ENCODE measurements at regions of chr13 and their contacts with region 1.

Region 1: DNA sequence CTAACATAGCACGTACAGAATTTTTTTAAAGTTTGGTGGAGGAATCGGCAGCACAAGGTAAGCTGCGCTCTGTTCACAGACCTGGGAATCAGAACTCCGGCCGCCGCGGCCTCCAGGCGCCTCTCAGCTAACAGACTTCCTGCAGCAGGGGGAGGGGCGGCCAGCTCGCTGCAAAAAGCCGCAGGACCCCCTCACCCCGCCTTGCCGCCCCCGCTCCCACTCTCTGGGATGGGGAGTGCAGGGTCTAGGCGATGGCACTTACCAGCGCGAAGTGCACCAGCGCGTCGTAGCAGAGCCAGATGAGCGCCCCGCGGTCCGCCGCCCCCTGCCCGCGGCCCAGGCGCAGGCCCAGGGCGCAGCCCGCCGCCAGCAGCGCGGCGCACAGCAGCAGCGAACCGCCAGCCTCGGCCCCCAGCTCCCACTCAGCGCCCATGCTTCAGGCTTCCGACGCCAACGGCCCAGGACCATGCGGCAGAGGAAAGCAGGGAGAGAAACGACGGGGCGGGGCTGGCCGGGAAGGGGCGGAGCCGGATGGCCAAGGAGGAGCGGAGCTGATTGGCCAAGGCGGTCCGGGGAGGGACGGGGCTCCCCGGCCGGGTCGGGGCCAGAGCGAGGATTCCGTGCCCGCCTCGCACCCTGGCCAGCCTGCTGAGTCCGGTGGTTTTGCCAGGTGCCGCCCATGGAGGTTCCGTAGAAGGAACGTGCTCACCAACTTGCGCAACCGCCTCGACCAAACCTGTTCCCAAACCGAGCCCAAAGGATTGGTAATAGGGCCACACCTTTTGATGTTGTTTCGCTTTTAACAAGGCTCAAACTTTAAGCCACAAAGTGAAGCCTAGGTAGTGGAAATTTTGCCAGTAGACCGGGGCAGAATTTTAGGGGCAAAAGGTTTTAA is at the start of gene EBPL:
- DNase-seq: peak; percentile 86
- ATAC-seq: peak; percentile 95
- H3K4me3 ChIP-seq: peak within 1 kb of the TSS; percentile 64 to 79 (median 79)
- H3K27ac ChIP-seq: peak within 1 kb of the TSS; percentile 86
- H3K4me1 ChIP-seq: peaks cover 39% of the 10 kb centered on the region
- H3K27me3 ChIP-seq: no peaks in the 10 kb centered on the region; a peak in 1 of 5 replicates
- CTCF ChIP-seq: no peak; the same call in 1 of the 2 replicates
- EP300 ChIP-seq: 0 out of 4 replicates have a peak, but pooled peaks of 1 of the 2 experiments have one; percentile 8
- POLR2A ChIP-seq: peak; percentile 80 to 88
- RAD21 ChIP-seq: peak; percentile 12; the same call in 1 of the 2 replicates
- total RNA-seq, gene EBPL: 51.8 and 96.5 TPM in 2 replicates

Region 2: GRCh38 chr13:49569956-49570689 is 121.1 kb before region 1 on chr13:
- CTCF ChIA-PET with region 1: no interaction called
- POLR2A ChIA-PET with region 1: no interaction called
- in situ Hi-C with region 1: no loop called
- intact Hi-C with region 1: no loop called
- DNase-seq: no peak
- ATAC-seq: no peak
- H3K4me3 ChIP-seq: no peak overlapping the region
- H3K27ac ChIP-seq: no peak overlapping the region
- H3K4me1 ChIP-seq: no peaks in the 10 kb centered on the region; the same call in 1 of the 2 replicates
- H3K27me3 ChIP-seq: no peaks in the 10 kb centered on the region
- CTCF ChIP-seq: no peak
- EP300 ChIP-seq: no peak
- POLR2A ChIP-seq: no peak
- RAD21 ChIP-seq: no peak

Region 3: GRCh38 chr13:49711218-49711863 is 20.1 kb after region 1 on chr13:
- CTCF ChIA-PET with region 1: no interaction called
- POLR2A ChIA-PET with region 1: interaction called, 13 read pairs
- in situ Hi-C with region 1: no loop called
- intact Hi-C with region 1: no loop called
- DNase-seq: peak; percentile 60
- ATAC-seq: peak; percentile 78
- H3K4me3 ChIP-seq: no peak overlapping the region
- H3K27ac ChIP-seq: peak overlapping the region; percentile 23
- H3K4me1 ChIP-seq: peaks cover 19% of the 10 kb centered on the region
- H3K27me3 ChIP-seq: no peaks in the 10 kb centered on the region; a peak in 1 of 5 replicates
- CTCF ChIP-seq: no peak
- EP300 ChIP-seq: no peak
- POLR2A ChIP-seq: no peak
- RAD21 ChIP-seq: no peak

Region 4: GRCh38 chr13:49740870-49741269 is 49.6 kb after region 1 on chr13:
- CTCF ChIA-PET with region 1: no interaction called
- POLR2A ChIA-PET with region 1: interaction called, 11 read pairs
- in situ Hi-C with region 1: no loop called
- intact Hi-C with region 1: no loop called
- DNase-seq: peak; percentile 74
- ATAC-seq: peak; percentile 76
- H3K4me3 ChIP-seq: no peak overlapping the region
- H3K27ac ChIP-seq: no peak overlapping the region
- H3K4me1 ChIP-seq: peaks cover 36% of the 10 kb centered on the region
- H3K27me3 ChIP-seq: no peaks in the 10 kb centered on the region
- CTCF ChIP-seq: no peak
- EP300 ChIP-seq: peak in 1 of 2 experiments; percentile 64; a peak in 1 of 4 replicates
- POLR2A ChIP-seq: no peak
- RAD21 ChIP-seq: no peak

Region 5: GRCh38 chr13:49746111-49746510 is 54.9 kb after region 1 on chr13:
- CTCF ChIA-PET with region 1: no interaction called
- POLR2A ChIA-PET with region 1: interaction called, 11 read pairs
- in situ Hi-C with region 1: no loop called
- intact Hi-C with region 1: no loop called
- DNase-seq: peak; percentile 85
- ATAC-seq: peak; percentile 99
- H3K4me3 ChIP-seq: no peak overlapping the region; a peak in 1 of 6 replicates
- H3K27ac ChIP-seq: peak overlapping the region; percentile 62
- H3K4me1 ChIP-seq: peaks cover 27% of the 10 kb centered on the region
- H3K27me3 ChIP-seq: no peaks in the 10 kb centered on the region
- CTCF ChIP-seq: no peak
- EP300 ChIP-seq: peak in 1 of 2 experiments; percentile 63; a peak in 2 of 4 replicates
- POLR2A ChIP-seq: no peak
- RAD21 ChIP-seq: no peak

Region 6: GRCh38 chr13:49781806-49782205 is 90.6 kb after region 1 on chr13:
- CTCF ChIA-PET with region 1: no interaction called
- POLR2A ChIA-PET with region 1: no interaction called
- in situ Hi-C with region 1: no loop called
- intact Hi-C with region 1: no loop called
- DNase-seq: no peak
- ATAC-seq: no peak
- H3K4me3 ChIP-seq: no peak overlapping the region
- H3K27ac ChIP-seq: no peak overlapping the region
- H3K4me1 ChIP-seq: peaks cover 81% of the 10 kb centered on the region
- H3K27me3 ChIP-seq: no peaks in the 10 kb centered on the region
- CTCF ChIP-seq: no peak
- EP300 ChIP-seq: no peak
- POLR2A ChIP-seq: no peak
- RAD21 ChIP-seq: no peak

Region 7: DNA sequence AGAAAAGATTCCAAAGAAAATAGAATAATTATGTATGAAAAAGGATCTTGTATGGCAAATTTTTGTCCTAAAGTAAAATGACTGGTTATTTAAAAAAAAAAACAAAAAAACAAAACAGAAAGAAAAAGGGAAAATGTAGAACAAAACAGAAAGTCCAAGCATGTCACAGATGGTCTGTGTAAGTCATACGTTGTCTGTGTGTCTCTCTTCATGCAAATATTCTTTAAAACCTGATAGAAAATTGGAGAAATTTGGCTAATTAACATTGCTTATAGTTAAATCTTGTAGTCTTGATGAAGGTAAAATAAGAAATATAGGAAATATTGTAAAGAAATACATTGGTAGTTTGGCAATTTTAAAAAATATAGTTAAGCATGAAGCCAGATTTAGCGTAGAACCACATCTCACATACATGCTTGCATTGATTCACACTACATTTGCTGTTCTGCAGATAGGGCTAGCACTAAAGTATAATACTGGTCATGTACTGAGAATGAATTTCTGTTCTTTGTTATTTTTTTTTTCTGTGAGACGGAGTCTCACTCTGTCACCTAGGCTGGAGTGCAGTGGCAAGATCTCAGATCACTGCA is 186.5 kb after region 1 on chr13:
- CTCF ChIA-PET with region 1: no interaction called
- POLR2A ChIA-PET with region 1: no interaction called
- in situ Hi-C with region 1: no loop called
- intact Hi-C with region 1: no loop called
- DNase-seq: no peak
- ATAC-seq: no peak
- H3K4me3 ChIP-seq: no peak overlapping the region
- H3K27ac ChIP-seq: no peak overlapping the region
- H3K4me1 ChIP-seq: no peaks in the 10 kb centered on the region
- H3K27me3 ChIP-seq: no peaks in the 10 kb centered on the region
- CTCF ChIP-seq: no peak
- EP300 ChIP-seq: no peak
- POLR2A ChIP-seq: no peak
- RAD21 ChIP-seq: no peak

Measured in HepG2 (cell line).